ENCODE measurements at regions of chr3 and their contacts with region 1.

Region 1: GRCh38 chr3:136042608-136043221 is 77.2 kb downstream of the PPP2R3A start:
- DNase-seq: no peak
- ATAC-seq: no peak
- H3K4me3 Mint-ChIP-seq: no peak overlapping the region
- H3K27ac Mint-ChIP-seq: no peak overlapping the region
- H3K4me1 Mint-ChIP-seq: no peaks in the 10 kb centered on the region
- H3K27me3 Mint-ChIP-seq: peaks cover 18% of the 10 kb centered on the region
- CTCF ChIP-seq: no peak

Region 2: GRCh38 chr3:134600685-134601463 is 1441.8 kb before region 1 on chr3:
- CTCF ChIA-PET with region 1: interaction called, 10 read pairs
- POLR2A ChIA-PET with region 1: no interaction called
- intact Hi-C with region 1: no loop called
- DNase-seq: peak; percentile 30
- ATAC-seq: no peak
- H3K4me3 Mint-ChIP-seq: no peak overlapping the region
- H3K27ac Mint-ChIP-seq: no peak overlapping the region
- H3K4me1 Mint-ChIP-seq: peaks cover 6% of the 10 kb centered on the region
- H3K27me3 Mint-ChIP-seq: no peaks in the 10 kb centered on the region
- CTCF ChIP-seq: peak; percentile 75

Region 3: GRCh38 chr3:135918580-135918962 is 124.1 kb before region 1 on chr3:
- CTCF ChIA-PET with region 1: no interaction called
- POLR2A ChIA-PET with region 1: no interaction called
- intact Hi-C with region 1: loop called (anchors 5 kb)
- DNase-seq: no peak
- ATAC-seq: no peak
- H3K4me3 Mint-ChIP-seq: no peak overlapping the region
- H3K27ac Mint-ChIP-seq: no peak overlapping the region
- H3K4me1 Mint-ChIP-seq: no peaks in the 10 kb centered on the region
- H3K27me3 Mint-ChIP-seq: peaks cover 4% of the 10 kb centered on the region
- CTCF ChIP-seq: no peak

Region 4: DNA sequence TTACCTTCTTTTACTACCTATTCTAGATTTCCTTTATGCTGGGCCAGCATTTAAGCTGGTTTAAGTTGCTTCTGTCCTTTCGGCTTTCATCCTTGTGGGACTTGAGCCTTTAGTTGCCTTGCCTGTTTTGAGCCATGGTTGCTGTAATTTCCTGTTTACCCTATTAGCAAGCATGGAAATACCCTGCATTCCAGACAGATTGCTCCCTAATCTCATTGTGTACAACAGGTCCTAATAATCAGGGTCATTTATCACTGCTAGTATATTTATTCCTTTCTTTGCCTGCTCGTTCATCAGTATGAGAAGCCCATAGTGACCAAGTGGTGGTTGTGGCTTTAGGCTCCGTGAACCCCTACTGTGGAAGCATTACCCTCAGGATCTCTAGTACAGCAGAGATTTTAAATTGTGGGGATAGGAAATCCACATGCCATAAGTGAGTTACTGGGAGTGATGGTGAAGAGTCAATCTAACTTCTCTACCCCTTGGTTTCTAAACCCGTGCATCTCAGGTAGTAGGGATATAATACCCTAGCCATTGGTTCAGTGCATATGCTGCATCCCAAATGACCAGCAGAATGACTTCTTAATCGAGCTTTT is 851.2 kb after region 1 on chr3:
- CTCF ChIA-PET with region 1: no interaction called
- POLR2A ChIA-PET with region 1: no interaction called
- intact Hi-C with region 1: no loop called
- DNase-seq: no peak
- ATAC-seq: no peak
- H3K4me3 Mint-ChIP-seq: no peak overlapping the region
- H3K27ac Mint-ChIP-seq: no peak overlapping the region
- H3K4me1 Mint-ChIP-seq: peaks cover 53% of the 10 kb centered on the region
- H3K27me3 Mint-ChIP-seq: no peaks in the 10 kb centered on the region
- CTCF ChIP-seq: no peak

Measured in activated B cell treated with CpG ODN at 0.5 μM for 24 hours (primary cell).